ENCODE measurements at regions of chr7 and their contacts with region 1.

Region 1: DNA sequence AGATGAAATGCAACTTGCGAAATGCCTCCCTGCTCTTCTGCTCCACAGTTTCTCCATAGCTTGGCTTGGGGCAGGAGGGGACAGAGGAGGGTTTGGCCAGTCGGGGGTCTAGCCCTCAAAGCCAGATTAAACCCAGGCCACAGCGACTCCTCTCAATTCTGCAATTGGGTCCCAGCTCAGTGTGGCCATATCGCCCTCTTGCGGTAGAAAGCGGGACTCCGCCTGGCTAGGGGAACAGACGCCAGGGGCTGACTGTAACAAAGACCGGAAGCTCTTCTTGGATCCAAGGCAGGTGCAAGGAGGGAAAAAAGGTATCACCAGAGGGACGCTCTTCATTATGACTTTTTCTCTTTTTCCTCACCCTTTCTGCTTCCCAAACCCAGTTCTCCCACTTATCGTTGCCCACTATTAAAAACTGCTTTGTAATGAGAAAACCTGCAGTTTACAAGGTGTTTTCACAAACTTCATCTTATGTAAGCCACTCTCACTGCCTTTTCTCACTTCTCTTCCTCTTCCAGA is 36.6 kb upstream of the TNPO3 start:
- DNase-seq: peak; percentile 67 to 77
- ATAC-seq: peak; percentile 96 to 99
- H3K4me3 ChIP-seq: no peak overlapping the region
- H3K27ac ChIP-seq: no peak overlapping the region
- H3K4me1 ChIP-seq: no peaks in the 10 kb centered on the region
- CTCF ChIP-seq: peak; percentile 96
- EP300 ChIP-seq: no peak
- POLR2A ChIP-seq: no peak
- RAD21 ChIP-seq: peak; percentile 95 to 96

Region 2: DNA sequence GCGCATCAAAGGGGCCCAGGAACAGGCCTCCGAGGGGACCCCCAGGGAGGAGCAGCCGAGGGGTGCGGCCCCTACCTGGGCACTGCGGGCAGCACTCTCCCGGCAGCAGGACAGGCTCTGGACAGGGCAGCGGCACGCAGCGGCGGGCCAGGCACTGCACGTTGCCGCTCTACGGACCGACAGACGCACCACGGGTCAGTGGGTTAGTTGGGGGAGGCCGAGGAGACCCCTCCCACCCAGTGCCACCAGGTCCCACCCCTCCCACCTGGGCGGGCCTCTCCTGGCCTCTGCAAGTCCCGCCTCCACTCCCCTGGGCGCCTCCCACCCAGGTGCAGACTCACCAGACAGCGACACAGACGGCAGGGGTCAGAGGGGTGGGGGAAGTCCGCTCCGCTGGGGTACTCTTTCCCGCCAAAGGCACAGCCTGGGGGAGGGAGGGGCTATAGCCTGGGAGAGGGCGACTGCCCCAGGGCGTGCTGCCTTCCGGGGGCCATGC is 200.4 kb before region 1 on chr7:
- CTCF ChIA-PET with region 1: interaction called, 10 read pairs
- POLR2A ChIA-PET with region 1: no interaction called
- DNase-seq: no peak
- ATAC-seq: peak; percentile 33 to 56; a peak in 5 of 6 replicates
- H3K4me3 ChIP-seq: peak overlapping the region; percentile 50
- H3K27ac ChIP-seq: peak overlapping the region; percentile 29 to 83; a peak in 5 of 6 replicates
- H3K4me1 ChIP-seq: no peaks in the 10 kb centered on the region; the same call in 2 of the 3 replicates
- CTCF ChIP-seq: no peak
- EP300 ChIP-seq: no peak
- POLR2A ChIP-seq: no peak
- RAD21 ChIP-seq: no peak

Region 3: DNA sequence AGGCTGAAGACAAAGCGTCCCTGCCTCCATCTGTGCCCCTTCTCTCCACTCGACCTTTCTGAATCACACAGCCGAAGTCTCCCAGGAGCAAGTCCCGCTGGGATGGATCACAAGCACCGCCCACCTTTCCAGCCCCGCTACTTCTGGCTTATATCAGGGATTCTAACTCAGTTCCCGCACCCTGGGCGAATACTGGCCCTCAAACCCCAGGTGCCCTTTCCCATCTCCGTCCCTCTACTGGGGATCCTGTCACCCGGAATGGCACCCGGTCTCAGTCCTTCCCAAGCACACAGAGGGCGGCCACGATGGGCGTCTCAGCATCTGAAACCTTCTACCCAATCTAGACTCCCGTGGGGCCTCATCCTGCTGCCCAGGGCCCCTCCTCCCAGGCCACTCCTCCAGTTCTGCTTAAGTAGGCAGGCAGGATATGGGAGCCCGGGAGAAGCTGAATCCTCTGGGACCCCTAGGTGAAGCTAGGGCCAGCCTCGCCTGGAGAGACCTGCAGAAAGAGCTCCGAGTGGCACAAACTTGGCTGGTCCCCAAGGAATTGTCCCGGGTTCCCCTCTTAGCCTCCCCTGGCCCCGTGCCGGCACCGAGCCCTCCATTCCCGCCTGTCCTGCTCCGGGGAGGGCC is 181.8 kb before region 1 on chr7:
- CTCF ChIA-PET with region 1: interaction called, 28 read pairs
- POLR2A ChIA-PET with region 1: no interaction called
- DNase-seq: no peak
- ATAC-seq: peak in 1 of 2 experiments; percentile 40; a peak in 3 of 6 replicates
- H3K4me3 ChIP-seq: no peak overlapping the region
- H3K27ac ChIP-seq: no peak overlapping the region
- H3K4me1 ChIP-seq: no peaks in the 10 kb centered on the region
- CTCF ChIP-seq: no peak
- EP300 ChIP-seq: no peak
- POLR2A ChIP-seq: no peak
- RAD21 ChIP-seq: no peak

Region 4: DNA sequence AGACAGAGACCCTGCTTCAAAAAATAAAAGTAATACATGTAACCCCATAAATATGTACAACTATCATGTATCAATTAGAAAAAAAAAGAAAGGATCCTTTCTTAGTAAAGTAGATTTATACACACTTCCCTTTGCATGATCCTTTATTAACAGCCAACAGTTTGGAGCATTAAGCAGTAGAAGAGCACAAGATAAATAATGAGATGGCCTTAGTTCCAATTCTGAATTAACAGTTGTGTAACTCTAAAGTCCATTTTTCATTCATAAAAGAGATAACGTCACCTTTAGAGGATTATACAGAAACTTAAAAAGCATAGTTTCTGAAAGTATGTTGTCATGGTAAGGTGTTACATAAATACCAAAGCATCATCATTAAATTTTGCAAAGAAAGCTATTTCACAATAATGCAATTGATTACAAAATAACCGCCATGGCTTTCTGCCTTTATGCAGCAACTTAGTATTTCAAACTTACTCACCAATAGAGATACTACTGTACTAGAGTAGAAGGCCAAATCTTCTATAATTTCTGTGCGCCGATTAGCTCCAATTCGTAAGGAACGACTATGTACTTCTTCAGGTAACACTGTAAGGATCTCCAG is 76.9 kb before region 1 on chr7:
- CTCF ChIA-PET with region 1: interaction called, 10 read pairs
- POLR2A ChIA-PET with region 1: no interaction called
- DNase-seq: no peak
- ATAC-seq: no peak
- H3K4me3 ChIP-seq: no peak overlapping the region
- H3K27ac ChIP-seq: no peak overlapping the region
- H3K4me1 ChIP-seq: peaks cover 20% of the 10 kb centered on the region
- CTCF ChIP-seq: no peak
- EP300 ChIP-seq: no peak
- POLR2A ChIP-seq: no peak
- RAD21 ChIP-seq: no peak

Region 5: DNA sequence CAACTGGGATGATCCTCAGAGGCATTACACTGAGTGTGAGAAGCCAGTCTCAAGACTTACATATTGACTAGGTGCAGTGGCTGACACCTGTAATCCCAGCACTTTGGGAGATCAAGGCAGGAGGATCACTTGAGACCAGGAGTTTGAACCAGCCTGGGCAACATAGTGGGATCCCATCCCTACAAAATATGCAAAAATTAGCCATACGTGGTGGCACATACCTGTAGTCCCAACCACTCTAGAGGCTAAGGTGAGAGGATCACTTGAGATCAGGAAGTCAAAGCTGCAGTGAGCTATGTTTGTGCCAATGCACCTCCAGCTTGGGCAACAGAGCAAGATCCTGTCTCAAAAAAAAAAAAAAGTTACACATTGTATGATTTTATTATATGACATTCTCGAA is 13.1 kb before region 1 on chr7:
- CTCF ChIA-PET with region 1: interaction called, 49 read pairs
- POLR2A ChIA-PET with region 1: no interaction called
- DNase-seq: no peak
- ATAC-seq: no peak
- H3K4me3 ChIP-seq: no peak overlapping the region
- H3K27ac ChIP-seq: no peak overlapping the region
- H3K4me1 ChIP-seq: no peaks in the 10 kb centered on the region
- CTCF ChIP-seq: no peak
- EP300 ChIP-seq: no peak
- POLR2A ChIP-seq: no peak
- RAD21 ChIP-seq: no peak

Region 6: DNA sequence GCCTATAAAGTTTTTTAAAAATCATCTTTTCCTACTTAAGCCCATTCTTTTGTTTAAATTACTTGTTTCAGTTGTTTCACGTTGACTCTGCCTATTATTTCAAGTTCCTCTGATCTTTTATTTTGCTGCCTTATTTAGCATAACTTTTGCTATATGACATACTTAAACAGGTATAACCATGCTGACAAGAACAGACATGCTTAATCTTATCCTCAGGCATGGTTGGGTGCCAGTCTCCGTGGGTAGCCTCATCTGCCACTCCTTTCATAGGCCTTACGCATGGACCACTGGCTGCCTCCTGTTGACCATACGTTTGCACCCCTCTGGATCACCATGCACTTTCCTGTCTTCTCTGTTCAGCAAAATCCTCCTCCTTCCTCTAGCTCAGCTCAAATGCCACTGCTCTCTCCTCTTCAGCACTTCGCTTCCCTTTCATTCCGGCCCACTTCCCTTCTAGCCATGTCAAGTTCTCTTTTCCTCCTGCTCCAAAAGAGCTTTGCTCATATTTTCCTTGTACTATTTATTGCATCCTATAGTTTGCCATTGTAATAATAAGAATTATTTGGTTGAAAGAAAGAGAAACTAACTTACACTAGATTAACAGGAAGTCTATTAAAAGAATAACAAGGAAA is 42.9 kb after region 1 on chr7:
- CTCF ChIA-PET with region 1: interaction called, 11 read pairs
- POLR2A ChIA-PET with region 1: no interaction called
- DNase-seq: no peak
- ATAC-seq: no peak; a peak in 1 of 6 replicates
- H3K4me3 ChIP-seq: no peak overlapping the region
- H3K27ac ChIP-seq: no peak overlapping the region
- H3K4me1 ChIP-seq: no peaks in the 10 kb centered on the region
- CTCF ChIP-seq: no peak
- EP300 ChIP-seq: no peak
- POLR2A ChIP-seq: no peak
- RAD21 ChIP-seq: no peak

Measured in A549 (cell line).